ENCODE measurements at regions of chr3 and their contacts with region 1.

Region 1: GRCh38 chr3:167882067-167882667 is 146.6 kb downstream of the SERPINI1 start:
- DNase-seq: peak; percentile 3
- H3K4me3 ChIP-seq: no peak overlapping the region
- H3K27ac ChIP-seq: no peak overlapping the region
- H3K27me3 ChIP-seq: no peaks in the 10 kb centered on the region
- CTCF ChIP-seq: peak; percentile 70

Region 2: GRCh38 chr3:167854846-167855245 is 27.3 kb before region 1 on chr3:
- CTCF ChIA-PET with region 1: interaction called, 36 read pairs
- POLR2A ChIA-PET with region 1: no interaction called
- DNase-seq: no peak
- H3K4me3 ChIP-seq: no peak overlapping the region
- H3K27ac ChIP-seq: no peak overlapping the region
- H3K27me3 ChIP-seq: no peaks in the 10 kb centered on the region
- CTCF ChIP-seq: no peak

Region 3: GRCh38 chr3:167861649-167862048 is 20.5 kb before region 1 on chr3:
- CTCF ChIA-PET with region 1: interaction called, 36 read pairs
- POLR2A ChIA-PET with region 1: no interaction called
- DNase-seq: no peak
- H3K4me3 ChIP-seq: no peak overlapping the region
- H3K27ac ChIP-seq: no peak overlapping the region
- H3K27me3 ChIP-seq: no peaks in the 10 kb centered on the region
- CTCF ChIP-seq: no peak